GM10248 (cell line): ENCODE measurements at regions of chr16 and their contacts with region 1.

Region 1: GRCh38 chr16:23435500-23435899 is 17.5 kb downstream of the COG7 start:
- DNase-seq: peak; percentile 71
- CTCF ChIP-seq: peak; percentile 87

Region 2: GRCh38 chr16:23149349-23149996 is 286.0 kb before region 1 on chr16 and contains the start of gene USP31:
- CTCF ChIA-PET with region 1: interaction called, 10 read pairs
- POLR2A ChIA-PET with region 1: no interaction called
- DNase-seq: peak; percentile 92
- CTCF ChIP-seq: no peak

Region 3: GRCh38 chr16:23182460-23183309 is 252.8 kb before region 1 on chr16 and contains the start of gene SCNN1G:
- CTCF ChIA-PET with region 1: interaction called, 304 read pairs
- POLR2A ChIA-PET with region 1: no interaction called
- DNase-seq: peak; percentile 92
- CTCF ChIP-seq: peak; percentile 98

Region 4: DNA sequence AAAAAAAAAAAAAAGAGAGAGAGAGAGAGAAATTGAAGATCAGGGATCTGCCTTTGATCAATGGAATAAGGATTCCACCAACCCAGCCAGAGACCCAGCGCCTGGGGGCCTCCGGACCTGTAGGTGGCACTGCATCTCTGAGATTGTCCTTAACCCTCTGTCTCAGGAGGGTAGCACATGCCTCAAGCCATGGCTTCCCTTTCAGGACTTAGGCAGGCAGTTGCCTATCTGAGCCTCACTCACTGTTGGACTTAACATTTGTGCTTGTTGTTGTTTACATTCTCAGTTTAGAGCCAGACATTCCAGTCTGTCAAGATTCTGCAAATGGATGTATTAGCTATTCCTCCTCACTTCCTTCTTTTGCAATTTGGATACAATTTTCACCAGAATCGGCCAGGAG is 138.5 kb before region 1 on chr16:
- CTCF ChIA-PET with region 1: interaction called, 44 read pairs
- POLR2A ChIA-PET with region 1: no interaction called
- DNase-seq: peak; percentile 56
- CTCF ChIP-seq: peak; percentile 25

Region 5: GRCh38 chr16:23373436-23374219 is 61.9 kb before region 1 on chr16:
- CTCF ChIA-PET with region 1: no interaction called
- POLR2A ChIA-PET with region 1: no interaction called
- DNase-seq: no peak
- CTCF ChIP-seq: no peak

Region 6: DNA sequence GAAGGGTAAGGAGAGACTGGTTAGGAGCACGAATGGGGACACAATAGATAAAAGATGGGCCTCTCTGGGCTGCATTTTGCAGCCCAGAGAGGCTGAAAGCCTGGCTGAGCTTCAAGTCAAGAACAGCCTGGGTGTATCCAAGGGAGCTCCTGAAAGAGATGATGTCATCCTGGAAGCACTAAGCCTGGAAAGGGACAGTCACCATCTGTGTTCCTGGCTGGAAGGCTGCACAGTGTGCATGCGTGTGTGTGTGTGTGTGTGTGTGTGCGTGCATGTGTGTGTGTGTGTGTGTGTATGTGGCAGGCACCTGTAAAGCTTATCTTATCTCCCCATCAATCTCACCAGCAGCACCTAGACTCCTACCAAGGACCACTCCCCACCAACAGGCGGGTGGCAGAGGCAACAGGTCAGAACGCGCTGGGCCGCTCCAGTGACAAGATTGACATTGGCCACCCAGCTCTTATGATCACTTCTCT is 26.6 kb before region 1 on chr16:
- CTCF ChIA-PET with region 1: interaction called, 49 read pairs
- POLR2A ChIA-PET with region 1: no interaction called
- DNase-seq: no peak
- CTCF ChIP-seq: no peak

Region 7: GRCh38 chr16:23423496-23424049 is 11.9 kb before region 1 on chr16:
- CTCF ChIA-PET with region 1: interaction called, 40 read pairs
- POLR2A ChIA-PET with region 1: no interaction called
- DNase-seq: no peak
- CTCF ChIP-seq: no peak

Region 8: GRCh38 chr16:23466066-23466885 is 30.8 kb after region 1 on chr16:
- CTCF ChIA-PET with region 1: interaction called, 10 read pairs
- POLR2A ChIA-PET with region 1: no interaction called
- DNase-seq: no peak
- CTCF ChIP-seq: no peak

Region 9: GRCh38 chr16:23889189-23889588 is 453.7 kb after region 1 on chr16:
- CTCF ChIA-PET with region 1: no interaction called
- POLR2A ChIA-PET with region 1: no interaction called
- DNase-seq: no peak
- CTCF ChIP-seq: no peak